MCF 10A (cell line): ENCODE measurements at regions of chr5 and their contacts with region 1.

Region 1: DNA sequence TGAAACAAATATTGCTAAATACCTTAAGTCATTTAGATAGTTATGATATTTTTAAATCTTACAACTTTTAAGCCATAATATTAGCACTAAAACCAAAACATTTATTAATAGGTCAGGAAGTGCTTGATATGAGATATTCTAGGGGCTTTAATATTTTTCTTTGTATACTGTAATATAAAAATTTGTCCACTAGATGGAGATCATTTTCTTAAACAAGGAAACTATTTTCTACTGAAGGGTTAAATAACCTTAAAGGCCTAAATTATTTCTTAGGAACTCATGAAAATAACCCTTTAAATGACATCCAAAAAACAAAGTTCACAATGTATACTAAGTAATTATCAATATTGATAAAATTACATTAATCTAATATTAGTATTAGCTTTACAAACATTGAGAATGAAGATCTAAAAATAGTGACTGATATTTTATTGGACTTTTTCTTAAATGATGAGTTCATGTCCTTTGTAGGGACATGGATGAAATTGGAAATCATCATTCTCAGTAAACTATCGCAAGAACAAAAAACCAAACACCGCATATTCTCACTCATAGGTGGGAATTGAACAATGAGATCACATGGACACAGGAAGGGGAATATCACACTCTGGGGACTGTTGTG is 635.7 kb downstream of the RAB3C start:
- DNase-seq: peak; percentile 11
- H3K4me3 Mint-ChIP-seq: no peak overlapping the region
- H3K27ac Mint-ChIP-seq: no peak overlapping the region
- H3K4me1 Mint-ChIP-seq: peaks cover 22% of the 10 kb centered on the region
- H3K27me3 Mint-ChIP-seq: no peaks in the 10 kb centered on the region
- CTCF ChIP-seq: peak; percentile 39

Region 2: DNA sequence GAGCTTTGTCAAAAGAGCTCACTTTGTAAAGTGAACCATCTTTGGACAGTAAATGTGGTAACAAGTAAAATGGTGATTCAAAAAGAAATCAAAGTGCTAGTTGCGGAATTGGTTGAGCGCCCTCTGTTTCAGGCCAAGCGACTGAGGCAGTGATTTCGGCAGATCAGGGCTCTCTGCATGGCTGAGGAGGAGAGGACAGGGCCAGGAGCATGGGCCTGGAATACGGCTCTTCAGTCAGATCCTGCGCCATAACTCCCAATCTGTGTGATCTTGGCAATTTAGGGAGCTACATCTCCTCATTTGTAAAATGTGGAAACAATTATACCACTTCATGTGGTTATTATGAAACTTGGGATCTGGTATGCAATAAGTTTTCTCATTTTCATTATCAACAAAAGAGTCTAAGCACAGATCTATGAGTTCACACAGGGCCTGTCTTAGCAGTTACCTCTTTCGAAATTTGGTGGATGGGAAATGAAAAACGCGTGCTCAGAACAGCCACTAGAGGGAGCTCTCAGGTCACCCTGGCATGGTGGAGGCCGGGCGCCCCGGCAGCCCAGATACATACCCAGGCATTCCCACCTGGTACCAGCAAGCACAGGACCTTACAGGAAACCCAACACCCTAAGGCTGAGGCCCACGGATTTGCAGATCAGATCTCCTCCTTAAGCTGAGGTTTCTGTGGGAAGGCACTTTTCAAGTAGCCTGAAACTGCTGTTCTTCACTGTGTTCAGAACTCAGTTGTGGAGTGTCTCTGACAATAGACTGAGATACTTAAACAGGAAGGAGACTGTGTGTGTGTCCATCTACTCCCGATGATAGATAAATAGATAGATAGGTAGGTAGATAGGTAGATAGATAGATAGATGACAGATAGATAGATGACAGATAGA is 332.0 kb before region 1 on chr5:
- CTCF ChIA-PET with region 1: no interaction called
- POLR2A ChIA-PET with region 1: no interaction called
- intact Hi-C with region 1: no loop called
- DNase-seq: peak; percentile 80
- H3K4me3 Mint-ChIP-seq: no peak overlapping the region
- H3K27ac Mint-ChIP-seq: no peak overlapping the region
- H3K4me1 Mint-ChIP-seq: peaks cover 45% of the 10 kb centered on the region
- H3K27me3 Mint-ChIP-seq: no peaks in the 10 kb centered on the region
- CTCF ChIP-seq: peak; percentile 92

Region 3: DNA sequence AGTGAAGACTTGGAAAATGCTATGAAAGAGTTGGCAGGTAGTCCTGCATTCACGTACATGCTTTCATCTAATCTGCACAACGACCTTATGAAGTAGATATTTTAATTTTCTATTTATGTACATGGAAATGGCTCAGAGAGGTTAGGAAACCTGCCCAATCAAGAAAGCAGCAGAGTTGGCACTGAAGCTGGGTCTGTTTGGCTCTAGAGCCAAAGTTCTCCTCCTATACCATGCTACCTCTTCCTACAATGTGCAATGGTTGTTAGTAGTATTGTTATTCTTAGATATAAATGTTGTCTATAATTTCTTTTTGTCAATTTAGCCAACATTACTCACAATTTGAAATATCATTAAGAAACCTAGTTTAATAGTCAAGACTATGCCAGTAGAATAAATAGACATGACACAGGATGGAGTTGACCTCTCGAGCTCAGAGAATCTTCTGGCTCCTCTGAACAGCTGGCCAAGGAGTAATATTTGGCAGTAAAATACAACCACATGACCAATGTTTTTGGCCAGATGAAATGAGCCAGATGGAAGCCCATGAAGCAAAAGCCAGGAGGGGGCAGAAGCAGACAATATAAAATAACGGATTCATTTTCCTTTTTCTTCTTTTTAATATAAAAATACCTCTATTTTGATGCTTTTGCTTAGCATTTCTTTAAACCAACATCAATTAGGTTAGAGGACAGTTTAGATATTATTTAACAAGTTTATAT is 132.7 kb after region 1 on chr5:
- CTCF ChIA-PET with region 1: interaction called, 4 read pairs
- POLR2A ChIA-PET with region 1: no interaction called
- intact Hi-C with region 1: loop called (anchors 1 kb)
- DNase-seq: peak; percentile 4
- H3K4me3 Mint-ChIP-seq: no peak overlapping the region
- H3K27ac Mint-ChIP-seq: no peak overlapping the region
- H3K4me1 Mint-ChIP-seq: no peaks in the 10 kb centered on the region
- H3K27me3 Mint-ChIP-seq: no peaks in the 10 kb centered on the region
- CTCF ChIP-seq: no peak